BJ (cell line): ENCODE measurements at regions of chr2 and their contacts with region 1.

Region 1: GRCh38 chr2:105114551-105114950 is 76.7 kb downstream of the MRPS9 start:
- DNase-seq: no peak
- H3K4me3 ChIP-seq: no peak overlapping the region
- H3K27me3 ChIP-seq: peaks cover under 1% of the 10 kb centered on the region; the same call in 1 of the 2 replicates
- CTCF ChIP-seq: peak; percentile 65

Region 2: DNA sequence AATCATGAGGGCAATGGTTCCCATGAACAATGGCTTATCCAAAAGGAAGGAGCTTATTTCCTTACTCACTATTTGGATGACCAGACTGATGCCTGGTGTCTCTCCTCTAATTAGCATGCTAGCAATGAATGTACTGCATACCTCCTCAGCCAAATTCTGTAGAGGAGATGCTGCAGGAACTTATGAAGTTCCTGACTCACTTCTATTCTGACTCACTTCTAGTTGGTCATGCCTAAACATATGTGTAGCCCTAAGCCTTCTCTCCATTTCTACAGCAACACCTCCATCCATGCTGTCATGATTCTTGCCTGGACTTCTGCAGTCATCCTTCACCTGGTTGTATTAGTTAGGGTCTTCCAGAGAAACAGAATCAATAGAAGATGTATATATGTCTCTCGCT is 136.6 kb before region 1 on chr2:
- CTCF ChIA-PET with region 1: no interaction called
- POLR2A ChIA-PET with region 1: no interaction called
- DNase-seq: no peak
- H3K4me3 ChIP-seq: no peak overlapping the region
- H3K27me3 ChIP-seq: no peaks in the 10 kb centered on the region
- CTCF ChIP-seq: no peak

Region 3: DNA sequence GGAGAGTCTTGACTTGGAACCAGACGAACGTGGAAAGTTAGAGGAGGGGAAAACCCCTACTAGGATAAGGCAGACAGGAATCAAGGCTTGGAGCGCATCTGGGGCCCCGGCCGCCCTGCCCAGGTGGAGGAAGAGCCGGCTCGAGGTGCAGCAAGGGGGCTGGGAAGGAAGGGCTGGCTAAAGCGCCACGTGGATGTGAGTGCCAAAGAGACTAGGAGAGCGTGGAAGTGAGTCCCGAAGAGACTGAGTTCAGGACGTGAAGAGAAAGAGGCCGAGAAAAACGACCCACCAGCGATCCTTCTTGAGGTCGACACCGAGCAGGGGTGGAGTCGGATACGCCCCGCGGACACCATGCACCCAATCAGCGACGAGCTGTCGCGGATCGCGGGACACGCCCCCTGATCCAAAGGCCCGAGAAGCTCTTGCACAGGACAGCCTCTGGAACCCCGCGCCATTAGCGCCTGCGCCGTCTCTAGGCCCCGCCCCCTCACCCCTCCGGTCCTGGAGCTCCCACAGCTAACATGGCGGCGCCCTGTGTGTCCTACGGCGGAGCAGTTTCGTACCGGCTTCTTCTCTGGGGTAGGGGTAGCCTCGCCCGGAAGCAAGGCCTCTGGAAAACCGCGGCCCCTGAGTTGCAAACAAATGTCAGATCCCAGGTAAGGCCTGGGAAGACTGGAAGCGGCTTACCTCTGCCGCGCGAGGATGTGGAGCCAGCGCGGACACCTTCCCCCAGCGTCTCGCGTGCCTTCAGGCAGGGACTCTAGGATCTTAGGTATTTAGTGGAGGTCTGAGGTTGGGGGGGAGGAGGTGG is 76.8 kb before region 1 on chr2 and contains the start of gene MRPS9:
- CTCF ChIA-PET with region 1: no interaction called
- POLR2A ChIA-PET with region 1: no interaction called
- DNase-seq: peak; percentile 91
- H3K4me3 ChIP-seq: peak within 1 kb of the TSS; percentile 74
- H3K27me3 ChIP-seq: no peaks in the 10 kb centered on the region
- CTCF ChIP-seq: no peak
- polyA plus RNA-seq, gene MRPS9: 19.3 and 21.7 TPM in 2 replicates

Region 4: DNA sequence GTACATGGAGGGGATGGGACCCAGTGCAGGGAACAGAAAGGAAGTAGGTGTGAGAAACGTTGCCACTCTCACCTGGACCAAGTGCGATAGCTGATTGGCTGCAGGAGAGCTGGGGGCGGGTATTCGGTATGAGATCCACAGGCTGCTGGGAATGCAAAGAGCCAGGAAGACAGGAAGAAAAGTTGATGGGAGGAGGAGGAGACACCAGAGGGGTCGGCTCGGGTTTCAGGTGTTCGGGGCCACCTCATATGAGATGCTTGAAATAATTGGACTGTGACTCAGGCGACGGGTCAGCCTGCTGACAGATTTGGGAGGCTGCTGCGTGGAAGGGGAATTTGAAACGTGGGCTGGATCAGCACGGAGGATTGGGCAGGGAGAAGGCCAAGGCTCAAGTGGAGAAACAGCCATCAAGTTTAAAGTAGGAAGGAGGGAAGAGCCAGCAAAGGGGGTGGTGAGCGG is 11.6 kb before region 1 on chr2:
- CTCF ChIA-PET with region 1: interaction called, 32 read pairs
- POLR2A ChIA-PET with region 1: no interaction called
- DNase-seq: peak; percentile 39
- H3K4me3 ChIP-seq: no peak overlapping the region
- H3K27me3 ChIP-seq: no peaks in the 10 kb centered on the region
- CTCF ChIP-seq: no peak

Region 5: GRCh38 chr2:105125428-105125827 is 10.9 kb after region 1 on chr2:
- CTCF ChIA-PET with region 1: interaction called, 22 read pairs
- POLR2A ChIA-PET with region 1: no interaction called
- DNase-seq: no peak
- H3K4me3 ChIP-seq: no peak overlapping the region
- H3K27me3 ChIP-seq: peaks cover 2% of the 10 kb centered on the region
- CTCF ChIP-seq: peak; percentile 23; the same call in 1 of the 2 replicates

Region 6: GRCh38 chr2:105235388-105236054 is 121.0 kb after region 1 on chr2:
- CTCF ChIA-PET with region 1: interaction called, 226 read pairs
- POLR2A ChIA-PET with region 1: no interaction called
- DNase-seq: peak; percentile 10
- H3K4me3 ChIP-seq: no peak overlapping the region
- H3K27me3 ChIP-seq: no peaks in the 10 kb centered on the region; the same call in 1 of the 2 replicates
- CTCF ChIP-seq: peak; percentile 78

Region 7: DNA sequence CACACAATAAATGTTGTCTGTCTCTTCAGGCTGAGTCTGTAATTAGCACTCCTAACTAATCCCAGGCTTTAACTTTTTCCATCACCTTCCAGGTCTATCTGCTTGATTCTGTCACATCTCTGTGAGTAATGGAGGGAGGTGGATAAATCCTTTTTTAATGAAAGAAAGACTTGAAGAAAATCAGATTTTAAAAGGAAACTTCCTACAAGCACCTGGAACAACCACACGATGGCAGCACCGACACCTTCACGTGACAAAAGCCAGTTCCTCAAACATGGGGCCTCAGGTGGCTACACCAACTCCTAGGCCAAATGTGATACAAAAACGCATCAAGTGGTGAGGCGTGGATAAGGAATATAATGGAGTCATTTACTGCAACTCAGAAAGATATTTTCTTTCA is 173.1 kb after region 1 on chr2:
- CTCF ChIA-PET with region 1: interaction called, 53 read pairs
- POLR2A ChIA-PET with region 1: no interaction called
- DNase-seq: no peak
- H3K4me3 ChIP-seq: no peak overlapping the region
- H3K27me3 ChIP-seq: no peaks in the 10 kb centered on the region
- CTCF ChIP-seq: peak; percentile 48

Region 8: GRCh38 chr2:105294844-105295481 is 180.4 kb after region 1 on chr2:
- CTCF ChIA-PET with region 1: interaction called, 53 read pairs
- POLR2A ChIA-PET with region 1: no interaction called
- DNase-seq: peak; percentile 17
- H3K4me3 ChIP-seq: no peak overlapping the region
- H3K27me3 ChIP-seq: no peaks in the 10 kb centered on the region
- CTCF ChIP-seq: peak; percentile 70

Region 9: DNA sequence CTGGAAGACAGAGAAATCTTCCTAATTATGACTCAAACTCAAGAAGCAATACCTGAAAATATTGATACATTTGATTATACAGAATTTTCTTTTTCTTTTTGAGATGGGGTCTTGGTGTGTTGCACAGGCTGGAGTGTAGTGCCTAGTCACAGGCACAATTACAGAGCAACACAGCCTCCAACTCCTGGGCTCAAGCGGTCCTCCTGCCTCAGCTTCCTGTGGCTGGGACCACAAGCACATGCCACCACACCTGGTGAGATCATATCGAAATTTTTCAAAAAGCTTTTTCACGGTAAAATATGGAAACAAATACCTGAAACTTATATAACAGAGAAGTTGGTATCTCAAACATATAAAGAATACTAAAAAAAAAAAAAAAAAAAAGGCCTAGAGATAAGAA is 187.1 kb after region 1 on chr2:
- CTCF ChIA-PET with region 1: interaction called, 11 read pairs
- POLR2A ChIA-PET with region 1: no interaction called
- DNase-seq: no peak
- H3K4me3 ChIP-seq: no peak overlapping the region
- H3K27me3 ChIP-seq: no peaks in the 10 kb centered on the region
- CTCF ChIP-seq: no peak